A673 (cell line): ENCODE measurements at regions of chrX and their contacts with region 1.

Region 1: GRCh38 chrX:24748202-24748843 is 54.6 kb downstream of the POLA1 start:
- DNase-seq: no peak
- H3K4me3 ChIP-seq: no peak overlapping the region
- H3K27ac ChIP-seq: no peak overlapping the region
- H3K4me1 ChIP-seq: no peaks in the 10 kb centered on the region
- H3K27me3 ChIP-seq: peaks cover 9% of the 10 kb centered on the region
- CTCF ChIP-seq: no peak

Region 2: GRCh38 chrX:25166546-25166945 is 418.2 kb after region 1 on chrX:
- CTCF ChIA-PET with region 1: no interaction called
- POLR2A ChIA-PET with region 1: no interaction called
- intact Hi-C with region 1: no loop called
- DNase-seq: no peak
- H3K4me3 ChIP-seq: no peak overlapping the region
- H3K27ac ChIP-seq: no peak overlapping the region
- H3K4me1 ChIP-seq: no peaks in the 10 kb centered on the region
- H3K27me3 ChIP-seq: peaks cover 36% of the 10 kb centered on the region
- CTCF ChIP-seq: no peak

Region 3: GRCh38 chrX:25275159-25275558 is 526.8 kb after region 1 on chrX:
- CTCF ChIA-PET with region 1: no interaction called
- POLR2A ChIA-PET with region 1: no interaction called
- intact Hi-C with region 1: loop called (anchors 2 kb)
- DNase-seq: peak; percentile 43
- H3K4me3 ChIP-seq: no peak overlapping the region
- H3K27ac ChIP-seq: no peak overlapping the region
- H3K4me1 ChIP-seq: no peaks in the 10 kb centered on the region
- H3K27me3 ChIP-seq: no peaks in the 10 kb centered on the region
- CTCF ChIP-seq: peak; percentile 55